Breast epithelium (tissue), 4 donors: ENCODE measurements at regions of chr7 and their contacts with region 1.

Region 1: GRCh38 chr7:130463553-130464434 is 23.0 kb upstream of the CEP41 start:
- DNase-seq: no peak
- H3K4me3 ChIP-seq: no peak overlapping the region
- H3K27ac ChIP-seq: no peak overlapping the region
- H3K4me1 ChIP-seq: no peaks in the 10 kb centered on the region
- H3K27me3 ChIP-seq: no peaks in the 10 kb centered on the region
- CTCF ChIP-seq: no peak
- POLR2A ChIP-seq: no peak

Region 2: GRCh38 chr7:130432886-130433285 is 30.9 kb before region 1 on chr7:
- intact Hi-C with region 1: loop called (anchors 2 kb)
- DNase-seq: no peak
- H3K4me3 ChIP-seq: no peak overlapping the region
- H3K27ac ChIP-seq: no peak overlapping the region
- H3K4me1 ChIP-seq: no peaks in the 10 kb centered on the region
- H3K27me3 ChIP-seq: no peaks in the 10 kb centered on the region
- CTCF ChIP-seq: no peak
- POLR2A ChIP-seq: no peak